Breast epithelium (tissue), 4 donors: ENCODE measurements at regions of chr7 and their contacts with region 1.

Region 1: DNA sequence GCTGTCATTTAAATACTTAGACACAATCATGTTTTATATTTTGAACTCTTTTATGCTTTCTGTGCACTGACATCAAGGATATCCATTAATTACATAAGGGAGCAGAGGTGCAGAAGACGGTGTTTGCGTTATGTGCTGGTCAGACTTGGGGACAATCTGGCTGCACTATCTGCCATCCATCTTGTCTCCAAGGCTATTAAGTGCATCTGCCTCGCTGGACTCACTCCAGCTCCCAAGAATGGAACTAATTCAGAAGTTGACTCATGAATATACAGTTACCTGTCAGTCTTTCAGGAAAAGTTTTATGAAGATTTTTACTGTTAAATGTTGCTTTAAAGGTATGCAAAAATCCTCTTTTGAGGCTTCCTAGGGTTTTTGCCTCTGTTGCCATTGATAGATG is 391.0 kb downstream of the SUGCT start:
- DNase-seq: no peak
- H3K4me3 ChIP-seq: no peak overlapping the region
- H3K27ac ChIP-seq: no peak overlapping the region
- H3K4me1 ChIP-seq: no peaks in the 10 kb centered on the region
- H3K27me3 ChIP-seq: no peaks in the 10 kb centered on the region
- CTCF ChIP-seq: no peak
- POLR2A ChIP-seq: no peak

Region 2: GRCh38 chr7:40551685-40552576 is 26.2 kb after region 1 on chr7:
- intact Hi-C with region 1: no loop called
- DNase-seq: no peak
- H3K4me3 ChIP-seq: no peak overlapping the region
- H3K27ac ChIP-seq: no peak overlapping the region
- H3K4me1 ChIP-seq: no peaks in the 10 kb centered on the region
- H3K27me3 ChIP-seq: no peaks in the 10 kb centered on the region
- CTCF ChIP-seq: no peak
- POLR2A ChIP-seq: no peak

Region 3: GRCh38 chr7:41559426-41559825 is 1033.7 kb after region 1 on chr7:
- intact Hi-C with region 1: loop called (anchors 5 kb)
- DNase-seq: no peak
- H3K4me3 ChIP-seq: no peak overlapping the region
- H3K27ac ChIP-seq: no peak overlapping the region
- H3K4me1 ChIP-seq: no peaks in the 10 kb centered on the region
- H3K27me3 ChIP-seq: no peaks in the 10 kb centered on the region
- CTCF ChIP-seq: no peak
- POLR2A ChIP-seq: no peak

Region 4: DNA sequence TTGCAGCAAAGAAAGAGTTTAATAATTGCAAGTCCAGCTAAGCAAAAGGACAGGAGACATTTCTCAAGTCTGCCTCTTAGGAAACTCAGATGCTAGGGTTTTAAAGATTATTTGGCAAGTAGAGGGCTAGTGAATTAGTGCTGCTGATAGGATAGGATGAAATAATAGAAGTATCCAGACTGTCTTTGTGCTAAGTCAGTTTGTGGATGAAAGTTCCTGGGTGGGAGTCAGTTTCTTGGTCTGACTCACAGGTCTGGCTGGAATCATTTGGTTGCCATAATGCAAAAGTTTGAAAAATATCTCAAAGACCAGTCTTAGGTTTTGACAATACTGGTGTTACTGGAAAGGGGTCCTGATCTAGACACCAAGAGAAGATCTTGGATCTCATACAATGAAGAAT is 1219.7 kb after region 1 on chr7:
- intact Hi-C with region 1: no loop called
- DNase-seq: no peak
- H3K4me3 ChIP-seq: no peak overlapping the region
- H3K27ac ChIP-seq: no peak overlapping the region
- H3K4me1 ChIP-seq: no peaks in the 10 kb centered on the region
- H3K27me3 ChIP-seq: no peaks in the 10 kb centered on the region
- CTCF ChIP-seq: no peak
- POLR2A ChIP-seq: no peak